GM23248 (cell line): ENCODE measurements at regions of chr6 and their contacts with region 1.

Region 1: GRCh38 chr6:56131435-56131834 is 115.9 kb downstream of the COL21A1 start:
- DNase-seq: no peak
- H3K4me3 ChIP-seq: no peak overlapping the region
- H3K27ac ChIP-seq: no peak overlapping the region
- H3K4me1 ChIP-seq: no peaks in the 10 kb centered on the region
- H3K27me3 ChIP-seq: no peaks in the 10 kb centered on the region

Region 2: GRCh38 chr6:56193846-56194245 is 62.4 kb after region 1 on chr6:
- in situ Hi-C with region 1: loop called (anchors 10 kb)
- DNase-seq: peak; percentile 24
- H3K4me3 ChIP-seq: no peak overlapping the region
- H3K27ac ChIP-seq: no peak overlapping the region
- H3K4me1 ChIP-seq: no peaks in the 10 kb centered on the region
- H3K27me3 ChIP-seq: no peaks in the 10 kb centered on the region